IMR-90 (cell line): ENCODE measurements at regions of chr6 and their contacts with region 1.

Region 1: GRCh38 chr6:101393251-101393828 is at the start of gene GRIK2:
- DNase-seq: peak; percentile 28
- ATAC-seq: peak; percentile 81
- H3K4me3 ChIP-seq: peak within 1 kb of the TSS; percentile 49
- H3K27ac ChIP-seq: peak within 1 kb of the TSS; percentile 0; the same call in 1 of the 2 replicates
- H3K4me1 ChIP-seq: peaks cover 1% of the 10 kb centered on the region; the same call in 1 of the 2 replicates
- H3K27me3 ChIP-seq: peaks cover 1% of the 10 kb centered on the region; the same call in 1 of the 2 replicates
- CTCF ChIP-seq: peak; percentile 47
- POLR2A ChIP-seq: peak; percentile 79; the same call in 1 of the 2 replicates
- RAD21 ChIP-seq: peak; percentile 41
- total RNA-seq, gene GRIK2: 15.2 and 15.8 TPM in 2 replicates

Region 2: DNA sequence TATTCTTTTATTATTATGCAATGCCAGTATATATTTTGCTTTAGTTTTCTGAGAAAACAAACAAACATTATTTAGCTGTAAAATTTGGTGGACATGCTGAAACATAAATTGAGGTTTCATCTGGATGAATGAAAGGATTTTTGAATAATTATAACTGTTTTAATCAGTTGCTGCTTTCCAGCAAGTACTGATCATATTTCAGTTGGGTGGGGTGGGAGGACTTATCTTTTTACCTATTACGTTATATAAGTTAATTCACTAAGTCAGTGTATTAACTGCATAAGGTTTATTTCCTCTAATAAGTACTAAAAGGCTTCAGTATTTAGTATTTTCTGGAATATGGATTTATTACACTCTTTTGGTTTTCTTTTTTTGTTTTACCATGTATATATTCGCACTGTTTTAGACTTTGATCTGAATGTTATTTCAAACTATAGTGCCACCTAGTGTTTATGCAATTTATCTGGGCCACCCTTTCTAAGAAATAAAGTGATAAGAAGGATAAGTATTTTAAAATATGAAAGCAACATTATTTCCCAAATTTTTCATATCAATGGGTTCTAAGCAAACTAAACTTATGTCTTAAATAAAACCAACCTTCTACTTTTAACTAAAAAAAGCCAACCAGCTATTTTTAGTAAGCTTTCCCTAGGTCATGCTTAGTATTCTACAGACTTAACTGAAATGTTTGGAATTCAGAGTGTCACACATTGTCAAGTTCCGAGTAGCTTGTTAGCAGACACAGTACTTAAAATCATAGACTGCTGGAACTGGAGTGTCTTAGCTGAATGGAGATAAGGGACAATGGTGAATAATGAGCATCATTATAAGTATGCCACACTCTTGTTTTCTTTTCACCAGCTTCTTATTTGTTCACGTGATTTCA is 1293.9 kb before region 1 on chr6:
- CTCF ChIA-PET with region 1: no interaction called
- POLR2A ChIA-PET with region 1: no interaction called
- dilution Hi-C with region 1: no loop called
- in situ Hi-C with region 1: no loop called
- intact Hi-C with region 1: loop called (anchors 10 kb)
- DNase-seq: peak; percentile 41
- ATAC-seq: 0 out of 2 replicates have a peak, but pooled peaks have one; percentile 43
- H3K4me3 ChIP-seq: no peak overlapping the region
- H3K27ac ChIP-seq: no peak overlapping the region
- H3K4me1 ChIP-seq: peaks cover 9% of the 10 kb centered on the region
- H3K27me3 ChIP-seq: peaks cover 3% of the 10 kb centered on the region
- CTCF ChIP-seq: peak; percentile 70
- POLR2A ChIP-seq: no peak
- RAD21 ChIP-seq: peak; percentile 53

Region 3: GRCh38 chr6:100775667-100776066 is 617.7 kb before region 1 on chr6:
- CTCF ChIA-PET with region 1: no interaction called
- POLR2A ChIA-PET with region 1: no interaction called
- dilution Hi-C with region 1: no loop called
- in situ Hi-C with region 1: no loop called
- intact Hi-C with region 1: loop called (anchors 10 kb)
- DNase-seq: no peak
- ATAC-seq: no peak
- H3K4me3 ChIP-seq: no peak overlapping the region
- H3K27ac ChIP-seq: no peak overlapping the region
- H3K4me1 ChIP-seq: peaks cover 2% of the 10 kb centered on the region; the same call in 1 of the 2 replicates
- H3K27me3 ChIP-seq: no peaks in the 10 kb centered on the region
- CTCF ChIP-seq: peak; percentile 22; the same call in 1 of the 2 replicates
- POLR2A ChIP-seq: no peak
- RAD21 ChIP-seq: peak; percentile 15; the same call in 1 of the 2 replicates

Region 4: DNA sequence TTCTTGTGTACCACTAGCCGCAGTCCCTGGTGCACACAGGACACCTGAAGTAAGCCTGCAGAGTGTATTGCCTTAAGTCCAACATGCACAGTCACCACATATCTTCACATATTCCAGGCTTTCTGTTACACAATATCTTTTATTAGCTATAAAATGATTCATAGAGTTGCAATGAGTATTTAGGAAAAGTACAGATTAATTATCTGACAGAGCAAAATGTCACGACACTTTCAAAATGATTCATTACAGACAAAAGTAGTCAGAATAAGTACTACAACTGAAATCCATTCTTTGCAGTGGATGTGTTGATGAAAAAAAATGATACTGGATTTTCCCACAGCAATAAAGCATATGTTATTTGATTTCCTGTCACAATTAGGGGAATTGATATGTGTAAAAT is 312.7 kb before region 1 on chr6:
- CTCF ChIA-PET with region 1: no interaction called
- POLR2A ChIA-PET with region 1: no interaction called
- dilution Hi-C with region 1: no loop called
- in situ Hi-C with region 1: no loop called
- intact Hi-C with region 1: no loop called
- DNase-seq: peak; percentile 33
- ATAC-seq: peak; percentile 24; the same call in 1 of the 2 replicates
- H3K4me3 ChIP-seq: no peak overlapping the region
- H3K27ac ChIP-seq: no peak overlapping the region
- H3K4me1 ChIP-seq: peaks cover 2% of the 10 kb centered on the region; the same call in 1 of the 2 replicates
- H3K27me3 ChIP-seq: no peaks in the 10 kb centered on the region
- CTCF ChIP-seq: no peak
- POLR2A ChIP-seq: no peak
- RAD21 ChIP-seq: no peak

Region 5: GRCh38 chr6:101806241-101806640 is 412.9 kb after region 1 on chr6:
- CTCF ChIA-PET with region 1: no interaction called
- POLR2A ChIA-PET with region 1: no interaction called
- dilution Hi-C with region 1: no loop called
- in situ Hi-C with region 1: no loop called
- intact Hi-C with region 1: loop called (anchors 5 kb)
- DNase-seq: peak; percentile 92
- ATAC-seq: peak; percentile 86
- H3K4me3 ChIP-seq: no peak overlapping the region
- H3K27ac ChIP-seq: no peak overlapping the region; the same call in 1 of the 2 replicates
- H3K4me1 ChIP-seq: peaks cover 13% of the 10 kb centered on the region
- H3K27me3 ChIP-seq: no peaks in the 10 kb centered on the region
- CTCF ChIP-seq: no peak
- POLR2A ChIP-seq: no peak
- RAD21 ChIP-seq: no peak

Region 6: GRCh38 chr6:102085257-102085656 is 691.9 kb after region 1 on chr6:
- CTCF ChIA-PET with region 1: no interaction called
- POLR2A ChIA-PET with region 1: no interaction called
- dilution Hi-C with region 1: no loop called
- in situ Hi-C with region 1: no loop called
- intact Hi-C with region 1: loop called (anchors 10 kb)
- DNase-seq: peak; percentile 29
- ATAC-seq: peak; percentile 76
- H3K4me3 ChIP-seq: no peak overlapping the region
- H3K27ac ChIP-seq: no peak overlapping the region
- H3K4me1 ChIP-seq: no peaks in the 10 kb centered on the region
- H3K27me3 ChIP-seq: no peaks in the 10 kb centered on the region
- CTCF ChIP-seq: no peak
- POLR2A ChIP-seq: no peak
- RAD21 ChIP-seq: no peak